Natural killer cell (primary cell): ENCODE measurements at regions of chr2 and their contacts with region 1.

Region 1: DNA sequence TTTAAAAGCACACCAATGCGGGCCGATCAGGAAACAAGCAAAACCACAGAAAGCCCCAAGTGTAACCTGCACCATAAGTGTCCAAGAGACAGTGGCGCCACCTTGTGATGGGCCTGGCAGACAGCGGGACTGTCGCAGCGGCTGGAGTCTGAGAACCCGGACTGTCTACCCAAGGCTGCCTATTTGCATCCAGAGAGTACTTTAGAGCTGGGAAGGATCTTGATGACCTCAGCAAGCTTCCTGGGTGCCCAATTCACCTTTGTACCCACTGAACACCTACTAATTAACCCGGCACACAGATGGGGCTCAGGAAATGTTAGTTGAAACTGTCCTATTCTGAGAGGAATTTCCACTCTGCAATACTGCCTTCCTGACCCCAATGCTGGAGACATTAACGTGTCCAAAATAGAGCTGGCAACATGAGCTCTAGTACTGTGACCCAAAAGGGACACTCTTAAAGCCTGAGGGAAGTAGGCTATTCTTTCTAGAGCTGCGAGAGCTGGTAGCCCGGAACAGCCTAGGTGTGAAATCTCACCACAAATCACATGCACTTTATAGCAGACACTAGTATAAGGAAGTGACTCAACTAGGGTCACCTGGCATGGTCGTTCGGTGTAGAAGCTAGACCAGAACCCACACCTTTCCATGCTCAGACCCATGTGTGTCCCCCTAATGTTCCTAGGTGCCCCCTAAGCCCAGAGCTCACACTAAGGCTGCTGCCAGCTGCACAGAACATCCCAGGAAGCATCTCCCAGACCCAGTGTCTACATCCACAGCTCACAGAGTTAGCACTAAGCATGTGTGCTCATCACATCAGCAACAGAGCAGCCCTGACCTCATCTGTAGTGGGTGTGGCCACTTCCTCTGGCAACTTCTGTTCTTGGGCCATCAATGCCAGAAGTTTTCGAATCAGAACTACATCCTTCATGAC is 25.4 kb downstream of the POLR1A start:
- DNase-seq: peak; percentile 82 to 91
- ATAC-seq: peak; percentile 79 to 92 (median 87)
- H3K4me3 ChIP-seq: no peak overlapping the region
- H3K4me3 Mint-ChIP-seq: peak overlapping the region; percentile 83
- H3K27ac ChIP-seq: peak overlapping the region; percentile 82
- H3K27ac Mint-ChIP-seq: peak overlapping the region; percentile 97
- H3K4me1 ChIP-seq: peaks cover 25% of the 10 kb centered on the region
- H3K4me1 Mint-ChIP-seq: peaks cover 25 to 26% of the 10 kb centered on the region in 2 donors
- H3K27me3 ChIP-seq: no peaks in the 10 kb centered on the region
- H3K27me3 Mint-ChIP-seq: no peaks in the 10 kb centered on the region
- CTCF ChIP-seq: peak; percentile 82

Region 2: DNA sequence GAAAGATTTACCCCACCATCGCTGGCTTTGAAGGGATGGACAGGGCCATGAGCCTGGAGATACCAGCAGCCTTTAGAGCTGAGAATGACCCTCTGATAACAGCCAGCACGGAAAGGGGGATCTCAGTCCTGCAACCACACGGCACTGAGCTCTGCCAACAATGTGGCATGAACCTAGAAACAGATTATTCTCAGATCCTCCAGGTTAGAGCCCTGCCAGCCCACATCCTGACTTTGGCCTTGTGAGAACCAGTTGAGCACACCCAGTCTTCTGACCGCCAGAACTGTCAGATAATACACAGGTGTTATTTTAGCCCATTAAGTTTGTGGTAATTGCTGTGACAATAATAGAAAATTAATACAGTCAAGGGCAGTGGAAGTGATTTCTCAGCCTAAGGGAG is 395.4 kb before region 1 on chr2:
- intact Hi-C with region 1: no loop called
- DNase-seq: peak in 1 of 2 donors; percentile 25
- ATAC-seq: peak; percentile 75 to 90 (median 83)
- H3K4me3 ChIP-seq: peak overlapping the region; percentile 28
- H3K4me3 Mint-ChIP-seq: no peak overlapping the region
- H3K27ac ChIP-seq: peak overlapping the region; percentile 69
- H3K27ac Mint-ChIP-seq: no peak overlapping the region
- H3K4me1 ChIP-seq: peaks cover 62% of the 10 kb centered on the region
- H3K4me1 Mint-ChIP-seq: peaks cover 19 to 27% of the 10 kb centered on the region in 2 donors
- H3K27me3 ChIP-seq: no peaks in the 10 kb centered on the region
- H3K27me3 Mint-ChIP-seq: no peaks in the 10 kb centered on the region
- CTCF ChIP-seq: no peak

Region 3: GRCh38 chr2:85826990-85827878 is 253.0 kb before region 1 on chr2:
- intact Hi-C with region 1: loop called (anchors 1 kb)
- DNase-seq: peak; percentile 83 to 90
- ATAC-seq: peak; percentile 94 to 100 (median 99)
- H3K4me3 ChIP-seq: no peak overlapping the region
- H3K4me3 Mint-ChIP-seq: no peak overlapping the region
- H3K27ac ChIP-seq: no peak overlapping the region
- H3K27ac Mint-ChIP-seq: peak overlapping the region; percentile 16 to 80
- H3K4me1 ChIP-seq: peaks cover 12% of the 10 kb centered on the region
- H3K4me1 Mint-ChIP-seq: peaks cover 14 to 21% of the 10 kb centered on the region in 2 donors
- H3K27me3 ChIP-seq: no peaks in the 10 kb centered on the region
- H3K27me3 Mint-ChIP-seq: peaks cover 0 to 6% of the 10 kb centered on the region in 2 donors
- CTCF ChIP-seq: peak; percentile 93

Region 4: GRCh38 chr2:85888684-85889626 is 191.3 kb before region 1 on chr2 and contains the start of gene ST3GAL5:
- intact Hi-C with region 1: loop called (anchors 1 kb)
- DNase-seq: peak; percentile 92 to 96
- ATAC-seq: peak; percentile 81 to 94 (median 90)
- H3K4me3 ChIP-seq: peak within 1 kb of the TSS; percentile 90
- H3K4me3 Mint-ChIP-seq: peak within 1 kb of the TSS; percentile 98
- H3K27ac ChIP-seq: peak within 1 kb of the TSS; percentile 83
- H3K27ac Mint-ChIP-seq: peak within 1 kb of the TSS; percentile 96 to 97
- H3K4me1 ChIP-seq: peaks cover 56% of the 10 kb centered on the region
- H3K4me1 Mint-ChIP-seq: peaks cover 71 to 74% of the 10 kb centered on the region in 2 donors
- H3K27me3 ChIP-seq: no peaks in the 10 kb centered on the region
- H3K27me3 Mint-ChIP-seq: no peaks in the 10 kb centered on the region
- CTCF ChIP-seq: peak; percentile 83
- total RNA-seq, gene ST3GAL5: 54.6 to 72.4 (median 66.1) TPM

Region 5: GRCh38 chr2:86068136-86068588 is 12.1 kb before region 1 on chr2:
- intact Hi-C with region 1: loop called (anchors 1 kb)
- DNase-seq: peak in 1 of 2 donors; percentile 72
- ATAC-seq: peak; percentile 76 to 92 (median 89)
- H3K4me3 ChIP-seq: no peak overlapping the region
- H3K4me3 Mint-ChIP-seq: peak overlapping the region; percentile 40
- H3K27ac ChIP-seq: peak overlapping the region; percentile 27
- H3K27ac Mint-ChIP-seq: peak overlapping the region; percentile 78 to 80
- H3K4me1 ChIP-seq: peaks cover 25% of the 10 kb centered on the region
- H3K4me1 Mint-ChIP-seq: peaks cover 19 to 24% of the 10 kb centered on the region in 2 donors
- H3K27me3 ChIP-seq: no peaks in the 10 kb centered on the region
- H3K27me3 Mint-ChIP-seq: no peaks in the 10 kb centered on the region
- CTCF ChIP-seq: no peak

Region 6: DNA sequence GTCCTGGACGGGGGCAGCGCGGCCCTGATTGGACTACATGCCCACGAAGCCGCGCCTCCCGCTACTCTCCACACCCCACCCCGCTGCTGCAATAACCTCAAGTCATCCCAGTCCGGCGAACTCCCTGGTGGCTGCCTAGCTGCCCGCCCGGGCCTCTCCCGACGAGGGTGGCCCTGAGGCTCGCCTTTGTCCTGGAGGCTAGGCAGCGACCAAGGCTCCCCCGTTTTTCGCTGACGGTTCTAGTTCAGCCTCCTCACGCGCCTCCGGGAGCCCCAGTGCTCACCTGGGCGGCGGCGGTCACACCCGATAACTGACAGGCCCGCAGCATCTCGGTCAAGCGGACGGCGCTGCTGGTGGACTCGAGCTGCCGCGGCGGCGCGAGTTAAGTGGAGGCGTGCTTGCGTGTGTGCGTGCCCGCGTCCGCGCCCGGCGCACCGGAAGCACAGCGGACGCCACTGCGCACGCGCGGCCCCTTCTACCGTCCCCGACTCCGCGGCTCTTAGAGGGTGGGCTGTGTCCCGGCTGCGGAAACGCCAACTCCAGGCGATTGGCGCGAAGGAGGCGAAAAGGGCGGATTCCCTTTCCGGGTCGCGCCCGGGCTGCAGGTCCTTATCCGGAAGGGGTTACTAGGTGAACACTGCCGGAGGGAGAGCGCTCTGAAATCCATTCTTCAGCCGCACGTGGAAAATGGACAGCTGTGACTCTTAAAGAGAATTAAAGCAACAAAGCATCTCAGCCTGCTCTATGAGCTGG is 115.0 kb after region 1 on chr2 and contains the start of gene IMMT:
- intact Hi-C with region 1: loop called (anchors 1 kb)
- DNase-seq: peak; percentile 86 to 97
- ATAC-seq: peak; percentile 88 to 97 (median 91)
- H3K4me3 ChIP-seq: peak within 1 kb of the TSS; percentile 99
- H3K4me3 Mint-ChIP-seq: peak within 1 kb of the TSS; percentile 97
- H3K27ac ChIP-seq: peak within 1 kb of the TSS; percentile 98
- H3K27ac Mint-ChIP-seq: peak within 1 kb of the TSS; percentile 97
- H3K4me1 ChIP-seq: peaks cover 27% of the 10 kb centered on the region
- H3K4me1 Mint-ChIP-seq: peaks cover 54 to 61% of the 10 kb centered on the region in 2 donors
- H3K27me3 ChIP-seq: no peaks in the 10 kb centered on the region
- H3K27me3 Mint-ChIP-seq: no peaks in the 10 kb centered on the region
- CTCF ChIP-seq: no peak
- total RNA-seq, gene IMMT: 54.5 to 62.6 (median 59.0) TPM

Region 7: GRCh38 chr2:86512034-86512433 is 431.8 kb after region 1 on chr2:
- intact Hi-C with region 1: no loop called
- DNase-seq: no peak
- ATAC-seq: no peak
- H3K4me3 ChIP-seq: no peak overlapping the region
- H3K4me3 Mint-ChIP-seq: no peak overlapping the region
- H3K27ac ChIP-seq: no peak overlapping the region
- H3K27ac Mint-ChIP-seq: no peak overlapping the region
- H3K4me1 ChIP-seq: no peaks in the 10 kb centered on the region
- H3K4me1 Mint-ChIP-seq: peaks cover 14 to 20% of the 10 kb centered on the region in 2 donors
- H3K27me3 ChIP-seq: no peaks in the 10 kb centered on the region
- H3K27me3 Mint-ChIP-seq: no peaks in the 10 kb centered on the region
- CTCF ChIP-seq: no peak